ENCODE measurements at regions of chr19 and their contacts with region 1.

Region 1: GRCh38 chr19:4007021-4007835 is at the start of gene PIAS4:
- DNase-seq: peak; percentile 98
- ATAC-seq: peak; percentile 86
- H3K4me3 ChIP-seq: peak within 1 kb of the TSS; percentile 27 to 84 (median 74)
- H3K4me3 Mint-ChIP-seq: peak within 1 kb of the TSS; percentile 93
- H3K27ac ChIP-seq: peak within 1 kb of the TSS; percentile 55 to 71
- H3K27ac Mint-ChIP-seq: peak within 1 kb of the TSS; percentile 92
- H3K4me1 ChIP-seq: peaks cover 14 to 35% of the 10 kb centered on the region in 2 donors
- H3K4me1 Mint-ChIP-seq: peaks cover 33% of the 10 kb centered on the region
- H3K27me3 ChIP-seq: no peaks in the 10 kb centered on the region
- H3K27me3 Mint-ChIP-seq: no peaks in the 10 kb centered on the region
- CTCF ChIP-seq: no peak
- total RNA-seq, gene PIAS4: 56.8 and 57.2 TPM in 2 replicates

Region 2: DNA sequence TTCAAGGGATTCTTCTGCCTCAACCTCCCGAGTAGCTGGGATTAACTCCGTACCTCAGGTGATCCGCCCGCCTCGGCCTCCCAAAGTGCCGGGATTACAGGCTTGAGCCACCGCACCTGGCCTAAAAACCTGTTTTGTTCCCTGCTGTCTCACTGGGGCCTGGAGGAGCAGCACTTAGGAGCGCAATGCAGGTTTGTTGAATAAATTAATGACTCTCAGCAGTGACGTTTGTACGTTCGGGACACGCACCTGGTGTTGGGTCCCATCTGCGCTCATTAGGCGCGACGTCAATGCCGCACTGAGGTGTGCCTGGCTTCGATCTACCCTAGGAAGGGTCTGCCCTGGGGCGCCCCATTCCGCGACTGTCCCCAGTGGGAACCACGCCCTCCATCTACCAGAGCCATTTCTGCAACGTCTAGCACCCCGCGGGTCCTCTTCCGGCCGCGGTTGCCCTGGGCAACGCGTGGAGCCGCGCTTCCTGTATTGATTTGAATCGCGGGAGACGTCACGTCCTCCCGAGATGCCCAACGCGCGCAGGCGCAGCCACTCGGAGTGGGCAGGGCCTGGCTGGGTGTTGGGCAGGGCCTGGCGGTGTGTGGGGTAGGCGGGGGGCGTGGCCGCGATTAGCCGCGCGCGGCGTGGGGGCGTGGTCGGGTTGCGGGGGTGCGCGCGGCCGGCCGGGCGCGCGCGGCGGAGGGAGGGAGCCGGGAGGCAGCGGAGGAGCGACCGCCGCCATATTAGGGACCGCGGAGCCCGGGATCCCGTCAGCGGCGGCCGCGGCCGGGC is 501.4 kb before region 1 on chr19 and contains the start of gene FZR1:
- CTCF ChIA-PET with region 1: no interaction called
- POLR2A ChIA-PET with region 1: no interaction called
- intact Hi-C with region 1: loop called (anchors 5 kb)
- DNase-seq: peak; percentile 100
- ATAC-seq: peak; percentile 91
- H3K4me3 ChIP-seq: peak within 1 kb of the TSS; percentile 74 to 95 (median 77)
- H3K4me3 Mint-ChIP-seq: peak within 1 kb of the TSS; percentile 92
- H3K27ac ChIP-seq: peak within 1 kb of the TSS; percentile 92 to 94
- H3K27ac Mint-ChIP-seq: peak within 1 kb of the TSS; percentile 99
- H3K4me1 ChIP-seq: peaks cover 12 to 21% of the 10 kb centered on the region in 2 donors
- H3K4me1 Mint-ChIP-seq: peaks cover 49% of the 10 kb centered on the region
- H3K27me3 ChIP-seq: no peaks in the 10 kb centered on the region
- H3K27me3 Mint-ChIP-seq: no peaks in the 10 kb centered on the region
- CTCF ChIP-seq: no peak
- total RNA-seq, gene FZR1: 96.1 and 105 TPM in 2 replicates

Region 3: GRCh38 chr19:3958808-3959707 is 48.2 kb before region 1 on chr19:
- CTCF ChIA-PET with region 1: no interaction called
- POLR2A ChIA-PET with region 1: no interaction called
- intact Hi-C with region 1: no loop called
- DNase-seq: no peak
- ATAC-seq: no peak
- H3K4me3 ChIP-seq: no peak overlapping the region
- H3K4me3 Mint-ChIP-seq: no peak overlapping the region
- H3K27ac ChIP-seq: no peak overlapping the region
- H3K27ac Mint-ChIP-seq: no peak overlapping the region
- H3K4me1 ChIP-seq: no peaks in the 10 kb centered on the region
- H3K4me1 Mint-ChIP-seq: no peaks in the 10 kb centered on the region
- H3K27me3 ChIP-seq: no peaks in the 10 kb centered on the region
- H3K27me3 Mint-ChIP-seq: no peaks in the 10 kb centered on the region
- CTCF ChIP-seq: no peak

Region 4: DNA sequence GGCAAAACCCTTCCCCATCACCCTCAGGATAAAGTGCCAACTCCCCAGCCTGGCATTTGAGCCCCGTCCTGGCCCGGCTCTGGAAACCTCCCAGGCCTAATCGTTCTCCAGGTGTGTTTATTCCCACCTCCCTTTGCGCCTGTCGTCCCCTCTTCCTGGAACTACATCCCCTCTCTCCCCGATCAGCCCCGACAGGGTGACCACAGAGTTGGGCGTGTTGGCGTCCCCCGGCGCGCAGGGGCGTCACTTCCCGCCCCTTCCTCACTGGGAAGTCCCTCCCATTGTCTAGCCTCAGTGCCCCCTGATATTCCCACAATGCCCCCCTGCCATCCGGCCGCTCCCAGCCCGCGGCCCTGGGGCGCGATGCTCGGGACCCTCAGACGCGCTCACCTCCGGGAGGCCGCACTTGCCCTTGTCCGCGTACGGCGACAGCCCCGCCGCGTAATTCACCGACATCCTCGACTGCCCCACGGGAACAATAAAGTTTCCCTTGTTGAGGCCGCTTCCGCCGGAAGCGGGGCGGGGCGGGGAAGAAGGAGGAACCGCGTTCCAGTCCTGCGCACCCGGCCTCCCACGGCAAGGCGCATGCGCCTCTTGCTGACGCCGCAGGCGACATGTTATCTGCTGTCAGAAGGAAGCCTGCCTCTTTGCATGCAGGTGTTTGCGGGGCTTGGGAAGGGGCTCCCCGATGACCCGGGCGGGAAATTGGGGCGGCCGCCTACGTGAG is 175.0 kb after region 1 on chr19 and contains the starts of genes ANKRD24 and SIRT6:
- CTCF ChIA-PET with region 1: no interaction called
- POLR2A ChIA-PET with region 1: no interaction called
- intact Hi-C with region 1: loop called (anchors 1 kb)
- DNase-seq: peak; percentile 97
- ATAC-seq: peak; percentile 83
- H3K4me3 ChIP-seq: peak within 1 kb of the TSS; percentile 65 to 91 (median 85)
- H3K4me3 Mint-ChIP-seq: peak within 1 kb of the TSS; percentile 99
- H3K27ac ChIP-seq: peak within 1 kb of the TSS; percentile 72 to 95
- H3K27ac Mint-ChIP-seq: peak within 1 kb of the TSS; percentile 98
- H3K4me1 ChIP-seq: peaks cover 20 to 32% of the 10 kb centered on the region in 2 donors
- H3K4me1 Mint-ChIP-seq: peaks cover 37% of the 10 kb centered on the region
- H3K27me3 ChIP-seq: no peaks in the 10 kb centered on the region
- H3K27me3 Mint-ChIP-seq: peaks cover 6% of the 10 kb centered on the region
- CTCF ChIP-seq: no peak
- total RNA-seq, gene ANKRD24: 0.37 and 1.4 TPM in 2 replicates
- total RNA-seq, gene SIRT6: 27.8 and 30.4 TPM in 2 replicates